ENCODE measurements at regions of chr2 and their contacts with region 1.

Region 1: GRCh38 chr2:113390124-113390849 is 47.2 kb upstream of the ZNG1B start:
- DNase-seq: peak; percentile 68
- H3K4me3 ChIP-seq: peak overlapping the region; percentile 12; the same call in 1 of the 2 replicates
- H3K27ac ChIP-seq: no peak overlapping the region
- H3K27me3 ChIP-seq: peaks cover 6% of the 10 kb centered on the region
- CTCF ChIP-seq: peak; percentile 95

Region 2: DNA sequence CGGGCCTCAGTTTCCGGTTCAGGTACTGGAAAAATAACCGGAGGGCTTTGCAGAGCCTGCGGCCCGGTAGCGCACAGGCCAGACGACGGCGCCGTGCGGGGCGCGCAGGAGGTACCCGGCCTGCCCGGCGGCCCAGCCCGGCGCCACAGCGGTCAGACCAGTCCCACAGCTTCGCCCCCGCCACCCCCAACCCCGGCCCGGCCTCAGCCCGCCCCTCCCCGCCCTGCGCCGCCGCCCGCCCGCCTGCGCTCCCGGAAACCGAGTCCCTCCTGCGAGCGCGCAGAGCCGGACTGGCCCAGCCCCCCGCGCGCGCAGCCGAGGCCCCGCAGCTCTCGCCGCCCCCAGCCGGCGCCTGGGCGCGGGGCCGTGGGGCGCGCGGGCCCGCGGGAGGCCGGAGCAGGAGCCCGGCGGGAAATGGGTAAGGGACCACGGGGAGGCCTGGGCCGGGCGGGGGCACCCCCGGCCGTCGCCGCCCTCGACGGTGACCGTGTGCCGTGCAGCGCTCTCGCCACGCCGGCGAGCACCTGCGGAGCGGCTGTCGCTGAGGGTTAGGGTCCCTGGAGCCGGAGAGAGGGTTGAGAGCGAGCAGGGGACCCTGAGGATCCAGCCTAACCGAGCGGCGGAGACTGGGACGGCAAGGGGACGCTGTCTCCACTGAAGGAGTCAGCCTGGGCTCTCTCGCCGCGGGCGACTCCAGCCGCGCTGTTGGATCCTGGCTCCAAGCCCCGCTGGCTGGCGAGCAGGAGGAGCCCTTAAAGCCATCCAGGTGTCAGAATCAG is 233.0 kb before region 1 on chr2:
- CTCF ChIA-PET with region 1: interaction called, 12 read pairs
- POLR2A ChIA-PET with region 1: no interaction called
- DNase-seq: no peak
- H3K4me3 ChIP-seq: peak overlapping the region; percentile 35
- H3K27ac ChIP-seq: no peak overlapping the region
- H3K27me3 ChIP-seq: peaks cover 30% of the 10 kb centered on the region
- CTCF ChIP-seq: no peak

Region 3: DNA sequence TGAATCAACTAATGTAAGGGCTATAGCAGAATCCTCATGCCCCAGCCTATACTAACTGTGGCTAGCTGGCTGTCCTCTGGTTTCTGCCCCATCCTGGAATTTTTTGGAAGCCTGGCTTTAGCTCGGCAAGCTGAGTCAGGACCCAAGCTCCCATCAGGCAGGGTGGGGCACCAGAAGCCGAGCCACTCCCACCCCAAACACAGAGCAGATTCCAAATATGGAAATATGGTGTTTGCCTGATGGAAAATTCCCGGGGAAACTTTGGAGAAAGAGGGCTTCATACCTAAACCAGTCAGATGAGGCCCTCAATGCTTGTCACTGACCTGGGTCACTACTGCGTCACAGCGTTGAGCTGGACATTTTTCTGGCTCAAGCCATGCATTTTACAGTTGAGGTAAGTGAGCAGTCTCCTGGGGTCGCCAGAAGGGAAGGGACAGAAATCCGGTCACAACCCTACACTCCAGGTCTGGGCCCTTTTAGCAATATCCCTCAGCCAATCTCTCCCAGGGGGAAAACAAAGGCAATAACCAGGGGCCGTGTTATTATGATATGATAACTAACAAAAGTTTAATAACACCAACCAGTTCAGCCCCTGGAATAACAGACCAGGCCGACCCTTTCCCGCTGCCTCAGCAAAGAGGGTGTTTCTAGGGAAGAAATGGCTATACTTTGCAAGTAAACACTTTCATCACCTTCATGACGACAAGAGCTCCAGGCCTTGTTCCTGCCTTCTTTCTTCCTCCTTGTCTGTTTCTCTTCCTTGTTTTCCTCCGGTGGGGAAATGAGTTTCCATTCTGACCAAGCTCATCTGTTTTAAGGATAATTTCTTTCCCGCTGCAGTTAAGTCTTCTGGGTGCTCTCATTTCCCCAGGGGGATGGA is 178.8 kb before region 1 on chr2:
- CTCF ChIA-PET with region 1: interaction called, 113 read pairs
- POLR2A ChIA-PET with region 1: no interaction called
- DNase-seq: no peak
- H3K4me3 ChIP-seq: no peak overlapping the region
- H3K27ac ChIP-seq: peak overlapping the region; percentile 11
- H3K27me3 ChIP-seq: no peaks in the 10 kb centered on the region
- CTCF ChIP-seq: no peak

Region 4: GRCh38 chr2:113248997-113249770 is 141.1 kb before region 1 on chr2:
- CTCF ChIA-PET with region 1: interaction called, 80 read pairs
- POLR2A ChIA-PET with region 1: no interaction called
- DNase-seq: peak; percentile 42
- H3K4me3 ChIP-seq: no peak overlapping the region
- H3K27ac ChIP-seq: no peak overlapping the region
- H3K27me3 ChIP-seq: no peaks in the 10 kb centered on the region
- CTCF ChIP-seq: peak; percentile 96

Region 5: GRCh38 chr2:113273027-113273551 is 117.2 kb before region 1 on chr2:
- CTCF ChIA-PET with region 1: interaction called, 10 read pairs
- POLR2A ChIA-PET with region 1: no interaction called
- DNase-seq: peak; percentile 20
- H3K4me3 ChIP-seq: no peak overlapping the region
- H3K27ac ChIP-seq: no peak overlapping the region
- H3K27me3 ChIP-seq: peaks cover 70% of the 10 kb centered on the region
- CTCF ChIP-seq: peak; percentile 46; the same call in 1 of the 2 replicates

Region 6: GRCh38 chr2:113376913-113377445 is 13.3 kb before region 1 on chr2:
- CTCF ChIA-PET with region 1: interaction called, 24 read pairs
- POLR2A ChIA-PET with region 1: no interaction called
- DNase-seq: no peak
- H3K4me3 ChIP-seq: no peak overlapping the region
- H3K27ac ChIP-seq: no peak overlapping the region
- H3K27me3 ChIP-seq: peaks cover 2% of the 10 kb centered on the region
- CTCF ChIP-seq: no peak